GM13977 (cell line): ENCODE measurements at regions of chr1 and their contacts with region 1.

Region 1: DNA sequence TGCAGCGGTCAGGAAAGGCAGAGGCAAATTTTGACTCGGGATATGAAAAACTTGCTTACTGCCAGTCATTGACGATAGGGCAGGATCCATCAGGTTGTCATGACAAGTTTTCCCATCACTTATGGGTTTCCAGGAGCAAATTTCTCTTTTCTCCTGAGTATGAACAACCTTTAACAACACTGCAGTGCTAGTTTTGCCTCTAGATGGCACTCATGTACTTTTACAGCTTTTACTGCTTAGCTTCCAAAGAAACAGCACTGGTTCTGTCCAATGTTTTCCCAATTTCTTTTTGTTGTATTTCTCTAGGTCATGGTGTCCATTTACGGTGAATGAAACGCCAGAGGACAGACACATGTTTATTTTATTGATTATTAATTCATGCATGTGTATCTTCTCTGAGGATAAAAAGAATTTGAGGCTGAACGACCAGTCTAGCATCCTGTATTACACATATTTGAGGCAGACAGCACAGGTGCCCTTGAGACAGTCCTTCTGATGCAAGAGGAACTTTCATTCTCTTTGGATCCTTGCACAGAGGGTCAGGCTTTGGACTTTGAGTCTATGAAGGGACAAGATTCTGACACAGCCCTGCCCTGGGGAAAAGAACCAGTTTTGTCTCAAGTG is 112.3 kb upstream of the TRABD2B start:
- DNase-seq: no peak
- CTCF ChIP-seq: peak; percentile 77

Region 2: GRCh38 chr1:48048064-48048463 is 61.4 kb before region 1 on chr1:
- in situ Hi-C with region 1: no loop called
- DNase-seq: no peak
- CTCF ChIP-seq: no peak

Region 3: GRCh38 chr1:48202030-48202752 is 92.7 kb after region 1 on chr1:
- in situ Hi-C with region 1: loop called (anchors 10 kb)
- DNase-seq: peak; percentile 40
- CTCF ChIP-seq: peak; percentile 82